ENCODE measurements at regions of chr9 and their contacts with region 1.

Region 1: DNA sequence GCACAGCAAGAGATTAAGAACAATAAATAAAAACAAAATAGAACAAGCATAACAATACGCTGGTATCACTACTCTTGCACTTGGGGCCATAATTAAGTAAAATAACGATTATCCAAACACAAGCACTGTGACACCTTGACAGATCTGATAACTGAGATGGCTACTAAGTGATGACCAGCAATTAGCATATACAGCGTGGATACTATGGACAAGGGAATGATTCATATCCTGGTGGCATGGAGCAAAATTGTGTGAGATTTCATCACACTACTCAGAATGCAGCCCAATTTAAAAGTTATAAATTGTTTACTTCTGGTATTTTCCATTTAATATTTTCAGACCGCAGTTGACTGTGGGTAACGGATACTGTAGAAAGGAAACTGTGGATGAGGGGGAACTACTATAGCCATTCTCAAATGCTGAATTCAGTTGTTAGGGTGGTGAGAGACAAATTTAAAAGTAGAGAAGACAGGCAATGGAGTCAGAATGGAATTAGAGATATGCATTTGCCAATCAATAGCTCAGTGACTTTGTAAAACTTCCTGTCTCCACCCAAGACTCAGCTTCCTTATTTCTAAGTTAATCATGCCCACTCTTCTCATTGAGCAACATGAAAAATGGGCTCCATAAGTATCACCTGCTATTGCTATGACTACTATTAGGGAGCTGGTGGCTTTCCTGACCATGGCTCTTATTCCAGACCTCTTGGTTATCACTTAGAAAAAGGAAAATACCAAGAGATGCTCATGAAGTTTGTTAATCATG is 300.8 kb downstream of the TRIM32 start:
- DNase-seq: no peak
- H3K4me3 ChIP-seq: no peak overlapping the region
- H3K27ac ChIP-seq: no peak overlapping the region
- H3K4me1 ChIP-seq: peaks cover 11% of the 10 kb centered on the region
- H3K27me3 ChIP-seq: no peaks in the 10 kb centered on the region
- CTCF ChIP-seq: no peak

Region 2: GRCh38 chr9:116870566-116870965 is 117.3 kb before region 1 on chr9:
- CTCF ChIA-PET with region 1: no interaction called
- dilution Hi-C with region 1: no loop called
- in situ Hi-C with region 1: no loop called
- intact Hi-C with region 1: loop called (anchors 5 kb)
- DNase-seq: peak; percentile 96
- H3K4me3 ChIP-seq: no peak overlapping the region
- H3K27ac ChIP-seq: peak overlapping the region; percentile 67
- H3K4me1 ChIP-seq: peaks cover 24% of the 10 kb centered on the region
- H3K27me3 ChIP-seq: no peaks in the 10 kb centered on the region
- CTCF ChIP-seq: no peak

Region 3: DNA sequence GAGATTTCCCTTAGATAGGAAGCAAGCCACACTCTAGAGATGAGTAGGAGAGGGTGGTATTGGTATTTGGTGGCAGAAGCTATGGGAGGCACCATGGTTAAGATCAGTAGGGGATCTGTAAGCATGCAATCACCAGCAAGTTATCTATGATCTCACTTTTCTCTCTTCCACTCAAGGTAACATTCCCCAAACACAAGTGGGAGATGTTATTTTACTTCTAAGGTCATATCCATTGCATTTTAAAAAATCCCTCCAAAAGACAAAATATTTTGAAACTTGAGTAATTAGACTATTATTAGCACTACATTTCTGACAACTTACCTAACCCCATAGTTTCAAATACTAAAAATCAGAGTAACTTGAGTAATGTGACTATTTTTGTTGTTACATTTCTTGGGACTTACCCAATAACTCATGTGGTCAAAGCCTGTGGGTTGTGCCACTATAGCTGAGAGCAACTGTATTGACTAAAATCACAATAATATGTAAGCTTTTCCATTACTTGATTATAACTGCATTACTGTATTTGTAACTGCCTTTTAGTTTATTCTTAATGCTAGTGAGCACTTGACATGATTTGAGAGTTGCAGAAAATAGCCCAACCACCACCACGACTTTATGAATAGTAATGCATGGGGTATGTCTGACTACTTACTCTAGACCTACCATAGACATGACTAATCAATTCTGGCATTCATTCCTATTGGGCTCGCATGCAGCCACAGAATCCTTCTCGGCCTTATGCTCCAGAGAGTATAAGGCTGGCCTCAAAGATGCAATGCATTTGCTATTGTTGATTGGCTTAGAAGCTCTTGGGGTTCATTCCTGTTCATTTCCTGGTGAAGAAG is 36.1 kb before region 1 on chr9:
- CTCF ChIA-PET with region 1: no interaction called
- dilution Hi-C with region 1: no loop called
- in situ Hi-C with region 1: no loop called
- intact Hi-C with region 1: loop called (anchors 2 kb)
- DNase-seq: peak; percentile 91
- H3K4me3 ChIP-seq: no peak overlapping the region
- H3K27ac ChIP-seq: peak overlapping the region; percentile 50
- H3K4me1 ChIP-seq: peaks cover 24% of the 10 kb centered on the region
- H3K27me3 ChIP-seq: no peaks in the 10 kb centered on the region
- CTCF ChIP-seq: no peak

Region 4: DNA sequence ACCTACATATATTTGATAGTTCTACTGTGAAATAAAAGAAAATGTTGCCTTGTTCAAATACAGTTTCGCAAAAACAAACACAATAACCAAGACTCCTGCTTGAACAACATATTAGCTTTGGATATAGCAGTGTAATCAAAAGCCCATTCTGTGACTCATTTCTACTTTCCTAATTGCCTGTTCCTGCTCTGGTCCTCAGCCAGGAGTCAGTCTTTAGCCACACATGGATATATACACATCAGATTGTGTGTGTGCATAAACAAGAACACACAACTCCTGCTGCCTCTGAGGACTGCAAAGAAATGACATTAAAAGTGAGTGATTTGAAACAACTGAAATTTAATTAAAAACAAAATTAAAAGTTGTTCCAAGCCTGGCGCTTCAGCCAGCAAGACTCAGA is 34.0 kb after region 1 on chr9:
- CTCF ChIA-PET with region 1: no interaction called
- dilution Hi-C with region 1: no loop called
- in situ Hi-C with region 1: no loop called
- intact Hi-C with region 1: no loop called
- DNase-seq: no peak
- H3K4me3 ChIP-seq: no peak overlapping the region
- H3K27ac ChIP-seq: no peak overlapping the region
- H3K4me1 ChIP-seq: no peaks in the 10 kb centered on the region
- H3K27me3 ChIP-seq: no peaks in the 10 kb centered on the region
- CTCF ChIP-seq: peak in 1 of 2 donors; percentile 22